ENCODE measurements at regions of chr18 and their contacts with region 1.

Region 1: GRCh38 chr18:45879681-45880655 is 54.5 kb downstream of the SIGLEC15 start:
- DNase-seq: peak; percentile 48 to 80 (median 69)
- ATAC-seq: peak; percentile 98
- H3K4me3 ChIP-seq: no peak overlapping the region
- H3K4me3 Mint-ChIP-seq: peak overlapping the region in 1 of 10 donors; percentile 8
- H3K27ac ChIP-seq: no peak overlapping the region
- H3K27ac Mint-ChIP-seq: peak overlapping the region in 7 of 9 donors; percentile 17 to 67 (median 41)
- H3K4me1 ChIP-seq: peaks cover 0 to 3% of the 10 kb centered on the region in 2 donors
- H3K4me1 Mint-ChIP-seq: peaks cover 9 to 16% (median 16%) of the 10 kb centered on the region in 7 donors
- H3K27me3 ChIP-seq: no peaks in the 10 kb centered on the region
- H3K27me3 Mint-ChIP-seq: no peaks in the 10 kb centered on the region

Region 2: DNA sequence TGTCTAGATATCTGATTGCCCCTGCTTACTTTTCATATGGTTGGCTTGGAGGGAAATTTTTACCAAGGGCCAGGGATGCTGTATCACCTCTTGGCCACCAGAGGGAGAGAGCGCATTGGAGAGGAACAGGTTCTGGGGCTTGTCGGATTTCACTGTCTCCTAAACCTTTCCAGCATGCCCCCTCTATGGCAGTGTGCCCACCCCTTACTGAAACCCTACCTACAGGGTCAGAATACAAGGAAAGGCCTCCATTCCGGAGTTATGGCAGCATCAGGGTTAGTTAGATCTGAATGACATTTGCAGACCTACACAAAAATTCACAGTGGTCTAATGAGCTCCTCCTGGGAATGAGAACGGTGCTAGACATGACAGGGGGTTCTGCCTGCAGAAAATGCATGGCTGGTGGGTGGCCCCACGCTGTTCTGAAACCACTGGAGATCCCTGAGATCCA is 258.9 kb before region 1 on chr18:
- CTCF ChIA-PET with region 1: interaction called, 5 read pairs
- POLR2A ChIA-PET with region 1: no interaction called
- intact Hi-C with region 1: loop called (anchors 1 kb)
- DNase-seq: peak in 8 of 9 donors; percentile 8 to 61 (median 40)
- ATAC-seq: peak; percentile 76
- H3K4me3 ChIP-seq: no peak overlapping the region
- H3K4me3 Mint-ChIP-seq: no peak overlapping the region
- H3K27ac ChIP-seq: no peak overlapping the region
- H3K27ac Mint-ChIP-seq: no peak overlapping the region
- H3K4me1 ChIP-seq: no peaks in the 10 kb centered on the region
- H3K4me1 Mint-ChIP-seq: no peaks in the 10 kb centered on the region
- H3K27me3 ChIP-seq: no peaks in the 10 kb centered on the region
- H3K27me3 Mint-ChIP-seq: peaks cover 0 to 27% (median 10%) of the 10 kb centered on the region in 5 donors

Region 3: GRCh38 chr18:45722899-45723298 is 157.1 kb before region 1 on chr18:
- CTCF ChIA-PET with region 1: interaction called, 20 read pairs
- POLR2A ChIA-PET with region 1: no interaction called
- intact Hi-C with region 1: loop called (anchors 1 kb)
- DNase-seq: peak in 8 of 9 donors; percentile 7 to 74 (median 40)
- ATAC-seq: peak; percentile 90
- H3K4me3 ChIP-seq: no peak overlapping the region
- H3K4me3 Mint-ChIP-seq: no peak overlapping the region
- H3K27ac ChIP-seq: no peak overlapping the region
- H3K27ac Mint-ChIP-seq: no peak overlapping the region
- H3K4me1 ChIP-seq: no peaks in the 10 kb centered on the region
- H3K4me1 Mint-ChIP-seq: peaks cover 0 to 15% (median 0%) of the 10 kb centered on the region in 7 donors
- H3K27me3 ChIP-seq: no peaks in the 10 kb centered on the region
- H3K27me3 Mint-ChIP-seq: peaks cover 0 to 35% (median 0%) of the 10 kb centered on the region in 5 donors

Region 4: GRCh38 chr18:45738658-45739057 is 141.3 kb before region 1 on chr18:
- CTCF ChIA-PET with region 1: no interaction called
- POLR2A ChIA-PET with region 1: no interaction called
- intact Hi-C with region 1: loop called in 1 of 2 experiments (anchors 5 kb)
- DNase-seq: no peak
- ATAC-seq: no peak
- H3K4me3 ChIP-seq: no peak overlapping the region
- H3K4me3 Mint-ChIP-seq: no peak overlapping the region
- H3K27ac ChIP-seq: no peak overlapping the region
- H3K27ac Mint-ChIP-seq: no peak overlapping the region
- H3K4me1 ChIP-seq: no peaks in the 10 kb centered on the region
- H3K4me1 Mint-ChIP-seq: no peaks in the 10 kb centered on the region
- H3K27me3 ChIP-seq: no peaks in the 10 kb centered on the region
- H3K27me3 Mint-ChIP-seq: no peaks in the 10 kb centered on the region

Region 5: DNA sequence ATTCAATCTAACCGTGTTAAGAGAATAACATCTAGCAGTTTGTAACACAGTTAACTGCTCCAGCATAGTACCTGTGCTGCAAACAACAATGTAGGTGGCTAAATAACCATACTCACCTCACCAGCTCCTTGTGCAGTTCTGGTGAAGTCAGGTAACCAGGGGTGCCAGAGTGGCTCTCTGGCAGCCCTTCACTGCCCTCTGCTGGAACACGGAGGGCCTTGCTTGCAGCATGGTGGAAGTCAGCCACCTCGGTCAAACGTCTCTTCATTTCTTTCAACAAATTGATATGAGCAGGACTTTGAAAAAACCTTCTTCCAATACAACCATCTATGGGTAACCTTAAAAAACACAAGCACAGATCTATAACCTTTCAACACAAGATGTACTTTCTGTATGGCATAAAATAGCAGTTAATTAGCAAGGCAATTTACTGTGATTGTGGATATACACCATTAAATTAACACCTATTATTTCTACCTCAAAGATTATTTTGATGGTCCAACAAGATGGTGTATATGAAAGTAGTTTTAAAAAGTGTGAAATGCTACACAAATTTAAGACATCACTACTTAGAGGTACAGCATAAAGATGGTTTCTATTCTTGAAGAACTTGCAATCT is 30.5 kb after region 1 on chr18:
- CTCF ChIA-PET with region 1: interaction called, 5 read pairs
- POLR2A ChIA-PET with region 1: no interaction called
- intact Hi-C with region 1: loop called in 1 of 2 experiments (anchors 1 kb)
- DNase-seq: peak; percentile 16 to 68 (median 57)
- ATAC-seq: peak; percentile 83
- H3K4me3 ChIP-seq: no peak overlapping the region
- H3K4me3 Mint-ChIP-seq: no peak overlapping the region
- H3K27ac ChIP-seq: no peak overlapping the region
- H3K27ac Mint-ChIP-seq: no peak overlapping the region
- H3K4me1 ChIP-seq: no peaks in the 10 kb centered on the region
- H3K4me1 Mint-ChIP-seq: peaks cover 0 to 5% (median 2%) of the 10 kb centered on the region in 7 donors
- H3K27me3 ChIP-seq: no peaks in the 10 kb centered on the region
- H3K27me3 Mint-ChIP-seq: no peaks in the 10 kb centered on the region